ENCODE measurements at regions of chr11 and their contacts with region 1.

Region 1: DNA sequence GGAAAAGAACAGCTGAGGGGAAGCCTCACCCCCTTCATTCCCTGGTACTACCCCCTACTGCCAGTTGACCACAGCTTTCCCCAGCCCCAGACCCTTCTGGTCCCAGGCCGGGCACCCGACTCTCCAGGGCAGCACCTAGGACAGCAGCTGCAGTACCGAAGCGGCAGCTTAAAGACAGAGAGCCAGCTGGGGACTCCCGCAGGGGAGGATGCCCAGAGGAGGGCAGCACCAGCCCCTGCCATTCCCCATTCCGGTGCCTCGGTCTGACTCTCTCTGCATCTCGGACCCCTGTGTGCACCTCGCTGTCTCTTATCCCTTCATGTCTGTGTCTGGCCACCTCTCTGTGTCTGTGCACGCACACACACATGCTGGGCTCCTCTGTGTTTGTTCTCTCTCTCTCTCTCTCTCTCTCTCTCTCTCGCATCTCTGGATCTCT is 9.4 kb downstream of the IGSF9B start:
- DNase-seq: peak; percentile 63
- H3K4me3 Mint-ChIP-seq: peak overlapping the region; percentile 69
- H3K27ac Mint-ChIP-seq: peak overlapping the region; percentile 83
- H3K4me1 Mint-ChIP-seq: peaks cover 80% of the 10 kb centered on the region
- H3K27me3 Mint-ChIP-seq: no peaks in the 10 kb centered on the region

Region 2: DNA sequence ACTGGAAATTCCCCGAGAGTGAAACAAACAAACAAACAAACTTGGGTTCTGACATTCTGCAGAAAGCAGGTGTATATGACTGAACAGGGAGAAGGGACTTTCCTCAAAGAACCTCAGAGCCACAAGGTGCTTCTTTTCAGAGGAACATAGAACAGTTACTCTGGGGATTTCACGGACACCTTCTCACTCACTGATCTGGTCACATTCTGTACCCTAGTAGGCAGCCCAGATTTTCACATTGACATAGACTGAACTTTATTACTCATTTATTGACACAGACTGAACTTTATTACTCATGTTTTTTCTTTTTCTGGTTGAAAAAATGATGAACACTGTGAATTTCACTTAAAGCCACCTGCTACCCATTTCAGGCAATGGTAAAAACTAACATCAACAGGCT is 678.1 kb before region 1 on chr11:
- intact Hi-C with region 1: loop called (anchors 5 kb)
- DNase-seq: peak; percentile 33
- H3K4me3 Mint-ChIP-seq: no peak overlapping the region
- H3K27ac Mint-ChIP-seq: peak overlapping the region; percentile 47
- H3K4me1 Mint-ChIP-seq: peaks cover 50% of the 10 kb centered on the region
- H3K27me3 Mint-ChIP-seq: peaks cover 2% of the 10 kb centered on the region

Region 3: DNA sequence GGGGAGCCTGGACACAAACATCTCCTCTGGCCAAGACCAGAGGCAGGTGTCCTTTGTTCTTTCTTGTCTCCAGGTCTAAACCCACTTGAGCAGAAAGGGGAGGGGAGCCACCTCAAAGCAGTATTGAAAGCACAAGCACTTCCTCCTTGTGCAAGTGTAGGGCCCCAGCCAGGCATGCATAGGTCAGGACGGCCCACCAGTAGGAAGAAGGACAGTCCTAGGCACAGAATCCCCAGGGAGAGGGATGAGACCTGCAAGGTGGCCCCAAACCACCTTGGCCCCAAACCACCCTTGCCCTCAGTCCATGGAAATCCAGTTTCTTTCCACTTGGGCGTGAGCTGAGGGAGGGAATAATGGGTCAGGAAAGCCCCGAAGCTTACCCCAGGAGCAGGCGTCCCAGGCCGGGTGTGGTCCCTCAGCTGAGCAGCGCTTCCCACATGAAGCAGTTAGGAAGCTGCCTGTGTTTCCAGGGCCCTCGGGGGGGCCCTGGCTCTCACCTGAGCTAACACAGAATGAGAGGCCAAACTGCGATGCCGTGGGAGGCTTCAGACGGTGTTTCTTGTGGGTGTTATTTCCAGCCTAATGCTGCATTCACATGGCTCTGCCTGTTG is 29.8 kb after region 1 on chr11:
- intact Hi-C with region 1: no loop called
- DNase-seq: no peak
- H3K4me3 Mint-ChIP-seq: no peak overlapping the region
- H3K27ac Mint-ChIP-seq: no peak overlapping the region
- H3K4me1 Mint-ChIP-seq: no peaks in the 10 kb centered on the region
- H3K27me3 Mint-ChIP-seq: peaks cover 18% of the 10 kb centered on the region

Region 4: GRCh38 chr11:134033696-134034491 is 86.6 kb after region 1 on chr11:
- intact Hi-C with region 1: loop called (anchors 1 kb)
- DNase-seq: peak; percentile 65
- H3K4me3 Mint-ChIP-seq: peak overlapping the region; percentile 24
- H3K27ac Mint-ChIP-seq: peak overlapping the region; percentile 59
- H3K4me1 Mint-ChIP-seq: peaks cover 55% of the 10 kb centered on the region
- H3K27me3 Mint-ChIP-seq: peaks cover 7% of the 10 kb centered on the region

Region 5: GRCh38 chr11:134068829-134069425 is 121.6 kb after region 1 on chr11 and contains the start of gene JAM3:
- intact Hi-C with region 1: loop called (anchors 5 kb)
- DNase-seq: peak; percentile 97
- H3K4me3 Mint-ChIP-seq: peak within 1 kb of the TSS; percentile 88
- H3K27ac Mint-ChIP-seq: peak within 1 kb of the TSS; percentile 86
- H3K4me1 Mint-ChIP-seq: peaks cover 8% of the 10 kb centered on the region
- H3K27me3 Mint-ChIP-seq: peaks cover 59% of the 10 kb centered on the region
- total RNA-seq, gene JAM3: 3.5 and 3.9 TPM in 2 replicates

Region 6: DNA sequence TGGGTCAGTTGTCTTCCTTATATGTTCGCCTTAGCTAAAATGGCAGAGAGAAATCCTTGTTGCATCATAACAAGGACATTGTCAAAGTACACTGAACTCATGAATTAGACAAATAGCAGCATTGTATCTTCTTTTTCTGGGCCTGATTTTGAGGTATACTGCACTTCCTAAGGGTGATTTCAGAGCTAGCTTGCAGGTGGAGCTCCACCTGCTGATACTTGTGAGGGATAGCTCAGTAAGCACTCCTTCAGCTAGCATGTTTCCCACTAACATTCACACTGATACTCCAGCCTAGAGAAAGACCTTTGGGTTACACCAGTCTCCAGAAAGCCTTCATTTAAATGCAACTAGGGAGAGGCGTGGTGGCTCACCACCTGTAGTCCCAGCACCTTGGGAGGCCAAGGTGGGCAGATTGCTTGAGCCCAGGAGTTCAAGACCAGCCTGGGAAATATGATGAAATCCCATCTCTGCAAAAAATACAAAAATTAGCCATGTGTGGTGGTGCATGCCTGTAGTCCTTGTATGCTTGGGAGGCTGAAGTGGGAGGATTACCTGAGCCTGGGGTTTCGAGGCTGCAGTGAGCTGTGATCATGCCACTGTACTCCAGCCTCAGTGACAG is 151.3 kb after region 1 on chr11:
- intact Hi-C with region 1: no loop called
- DNase-seq: no peak
- H3K4me3 Mint-ChIP-seq: no peak overlapping the region
- H3K27ac Mint-ChIP-seq: no peak overlapping the region
- H3K4me1 Mint-ChIP-seq: peaks cover 5% of the 10 kb centered on the region
- H3K27me3 Mint-ChIP-seq: peaks cover 5% of the 10 kb centered on the region

Region 7: DNA sequence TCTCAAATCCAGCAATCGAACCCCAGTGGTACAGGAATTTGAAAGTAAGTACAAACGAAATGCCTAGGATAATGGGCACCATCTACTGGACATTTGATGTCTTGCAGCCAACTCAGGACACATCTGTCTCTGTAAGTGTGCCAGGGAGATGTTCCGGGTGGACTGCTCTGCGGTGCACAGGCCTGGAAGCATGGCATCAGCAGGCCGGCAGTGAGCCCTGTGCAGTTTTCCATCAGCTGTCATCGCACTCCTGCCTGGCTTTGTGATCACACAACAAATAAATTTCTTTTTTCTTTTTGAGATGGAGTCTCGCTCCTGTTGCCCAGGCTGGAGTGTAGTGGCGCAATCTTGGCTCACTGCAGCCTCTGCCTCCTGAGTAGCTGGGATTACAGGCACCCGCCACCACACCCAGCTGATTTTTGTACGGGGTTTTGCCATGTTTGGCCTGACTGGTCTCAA is 192.6 kb after region 1 on chr11:
- intact Hi-C with region 1: loop called (anchors 5 kb)
- DNase-seq: peak; percentile 26
- H3K4me3 Mint-ChIP-seq: no peak overlapping the region
- H3K27ac Mint-ChIP-seq: no peak overlapping the region
- H3K4me1 Mint-ChIP-seq: peaks cover 13% of the 10 kb centered on the region
- H3K27me3 Mint-ChIP-seq: no peaks in the 10 kb centered on the region

Region 8: GRCh38 chr11:134275534-134276395 is 328.4 kb after region 1 on chr11 and contains the start of gene GLB1L3:
- intact Hi-C with region 1: loop called (anchors 5 kb)
- DNase-seq: peak; percentile 81
- H3K4me3 Mint-ChIP-seq: peak within 1 kb of the TSS; percentile 96
- H3K27ac Mint-ChIP-seq: peak within 1 kb of the TSS; percentile 93
- H3K4me1 Mint-ChIP-seq: peaks cover 53% of the 10 kb centered on the region
- H3K27me3 Mint-ChIP-seq: peaks cover 2% of the 10 kb centered on the region
- total RNA-seq, gene GLB1L3: 14.6 and 16.1 TPM in 2 replicates